ENCODE measurements at regions of chr7 and their contacts with region 1.

Region 1: DNA sequence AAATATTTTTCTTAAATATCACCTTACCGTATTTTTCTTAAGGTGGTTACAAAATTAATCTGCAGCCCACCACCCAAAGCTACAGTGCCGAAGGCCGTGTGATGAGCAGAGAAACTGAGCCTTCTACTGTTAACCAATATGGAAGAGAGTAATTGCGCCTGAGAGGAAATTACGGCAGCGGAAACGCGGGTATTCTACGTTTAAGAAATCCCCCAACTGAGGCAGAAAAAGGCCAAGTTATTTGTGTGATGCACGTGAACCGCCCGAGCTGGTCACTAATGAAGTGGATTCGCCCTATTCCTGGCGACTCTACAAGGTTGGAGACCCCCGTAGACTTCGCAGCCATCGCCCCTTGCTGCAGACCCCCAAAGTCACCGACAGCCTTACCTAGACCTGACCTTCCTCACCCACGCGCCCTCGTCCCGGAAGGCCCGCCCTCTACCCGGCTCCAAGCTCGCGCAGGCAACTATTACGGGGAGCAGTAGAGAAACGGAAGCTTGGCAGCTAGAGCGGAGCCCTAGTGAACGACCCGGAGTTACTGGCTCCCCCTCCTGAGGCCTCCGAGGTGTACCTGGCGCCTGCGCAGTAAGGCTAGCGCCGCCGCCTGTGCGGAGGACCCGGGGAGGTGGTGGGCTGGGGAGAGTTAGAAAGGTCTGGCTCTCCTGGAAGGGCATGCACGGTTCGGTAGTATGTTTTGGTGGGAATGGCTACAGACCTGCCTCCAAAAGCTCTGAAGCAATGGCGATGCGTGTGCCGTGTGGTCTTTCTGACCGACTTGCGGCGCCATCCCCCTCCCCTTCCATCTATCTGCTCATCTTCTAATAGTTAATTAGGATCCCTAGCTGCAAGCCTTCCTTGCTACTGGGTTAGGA is at the start of gene MRPS33:
- DNase-seq: peak; percentile 81 to 98
- H3K4me3 ChIP-seq: peak within 1 kb of the TSS; percentile 51 to 72
- H3K27ac ChIP-seq: peak within 1 kb of the TSS; percentile 82 to 87
- H3K4me1 ChIP-seq: peaks cover 3 to 6% of the 10 kb centered on the region in 2 donors
- H3K27me3 ChIP-seq: no peaks in the 10 kb centered on the region
- CTCF ChIP-seq: peak in 2 of 3 experiments; percentile 30 to 50
- total RNA-seq, gene MRPS33: 8.9 TPM

Region 2: GRCh38 chr7:140397784-140398750 is 616.7 kb before region 1 on chr7 and contains the start of gene SLC37A3:
- intact Hi-C with region 1: loop called (anchors 10 kb)
- DNase-seq: peak; percentile 37 to 89
- H3K4me3 ChIP-seq: peak within 1 kb of the TSS; percentile 81
- H3K27ac ChIP-seq: peak within 1 kb of the TSS; percentile 76 to 83
- H3K4me1 ChIP-seq: peaks cover 0 to 3% of the 10 kb centered on the region in 2 donors
- H3K27me3 ChIP-seq: no peaks in the 10 kb centered on the region
- CTCF ChIP-seq: peak in 1 of 3 experiments; percentile 29
- total RNA-seq, gene SLC37A3: 15.0 TPM

Region 3: DNA sequence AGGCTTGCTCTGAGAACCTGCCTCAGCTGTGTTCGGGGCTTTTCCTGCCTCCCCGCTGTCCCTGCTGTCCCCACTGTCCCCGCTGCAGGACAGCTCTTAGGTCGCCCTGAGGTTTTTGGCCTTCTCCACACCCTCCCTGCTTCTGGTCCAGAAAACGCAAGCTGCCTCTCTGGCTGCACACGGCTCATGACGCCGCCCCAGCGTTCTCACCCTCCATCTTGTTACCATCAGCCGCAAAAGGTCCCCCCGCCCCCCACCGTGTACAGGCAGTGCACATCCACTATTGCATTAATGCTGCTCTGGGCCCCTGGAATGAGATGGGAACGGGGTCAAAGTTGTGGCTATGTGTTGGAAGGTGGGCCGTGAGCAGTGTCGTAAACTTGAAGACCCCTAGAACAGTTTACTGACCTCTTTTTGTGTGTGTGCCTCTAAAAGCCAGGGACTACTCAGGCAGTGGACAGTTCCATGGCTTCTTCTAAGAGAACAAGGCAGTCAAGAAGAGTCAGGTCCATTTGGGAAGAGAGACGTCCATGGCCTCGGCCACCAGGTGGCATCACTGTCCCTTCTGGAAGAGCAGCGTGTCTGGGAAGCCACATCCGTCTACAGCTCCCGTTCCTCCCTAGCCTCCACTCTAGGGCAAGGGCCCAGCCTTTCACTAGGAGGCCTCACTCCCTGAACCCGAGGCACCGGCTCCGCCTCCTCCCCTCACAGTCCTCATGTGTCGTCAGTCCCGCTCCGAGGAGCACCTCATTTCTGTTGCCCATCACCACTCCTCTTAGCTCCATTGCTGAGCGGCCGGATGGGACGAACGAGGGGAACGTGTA is 497.0 kb before region 1 on chr7:
- intact Hi-C with region 1: loop called (anchors 5 kb)
- DNase-seq: peak; percentile 16 to 88
- H3K4me3 ChIP-seq: peak overlapping the region in 1 of 2 donors; percentile 6
- H3K27ac ChIP-seq: no peak overlapping the region
- H3K4me1 ChIP-seq: peaks cover 0 to 3% of the 10 kb centered on the region in 2 donors
- H3K27me3 ChIP-seq: no peaks in the 10 kb centered on the region
- CTCF ChIP-seq: peak; percentile 64 to 77 (median 72)

Region 4: DNA sequence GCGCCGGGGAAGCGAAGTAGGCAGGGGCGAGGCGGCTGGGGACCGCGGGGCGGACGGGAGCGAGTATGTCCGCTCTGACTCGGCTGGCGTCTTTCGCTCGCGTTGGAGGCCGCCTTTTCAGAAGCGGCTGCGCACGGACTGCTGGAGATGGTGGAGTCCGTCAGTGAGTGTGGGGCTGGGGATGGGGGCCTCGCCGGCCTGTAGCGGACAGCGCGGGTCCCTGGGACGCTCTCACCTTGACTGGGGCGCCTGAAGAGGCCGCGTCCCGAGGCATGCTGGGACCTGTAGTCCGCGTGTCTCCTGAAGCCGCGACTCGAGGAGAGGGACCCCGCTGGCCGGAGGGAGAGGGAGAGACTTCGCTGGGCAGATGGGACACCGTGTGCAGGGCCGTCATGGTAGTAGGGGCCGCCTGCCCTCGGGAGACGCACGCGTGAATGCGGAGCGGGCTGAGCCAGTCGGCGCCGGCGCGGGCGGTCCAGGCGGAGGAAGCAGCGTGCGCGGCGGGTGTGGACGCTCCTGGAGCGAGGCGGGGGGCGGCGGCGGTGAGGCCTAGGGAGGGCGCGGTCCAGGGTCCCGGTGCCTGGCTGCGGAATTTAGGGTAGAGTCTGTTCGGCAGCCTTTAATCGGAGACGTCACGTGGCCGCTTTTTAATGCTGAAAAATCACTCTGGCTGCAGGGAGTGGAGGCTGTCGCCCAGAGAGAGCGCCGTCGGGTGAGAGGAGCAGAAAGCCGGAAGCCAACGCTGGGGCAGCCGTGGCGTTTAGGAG is 317.9 kb before region 1 on chr7 and contains the start of gene NDUFB2:
- intact Hi-C with region 1: loop called (anchors 2 kb)
- DNase-seq: peak in 1 of 2 donors; percentile 77
- H3K4me3 ChIP-seq: peak within 1 kb of the TSS; percentile 62 to 74
- H3K27ac ChIP-seq: peak within 1 kb of the TSS; percentile 80 to 89
- H3K4me1 ChIP-seq: peaks cover 0 to 13% of the 10 kb centered on the region in 2 donors
- H3K27me3 ChIP-seq: no peaks in the 10 kb centered on the region
- CTCF ChIP-seq: no peak
- total RNA-seq, gene NDUFB2: 35.9 TPM

Region 5: GRCh38 chr7:140924019-140924820 is 90.5 kb before region 1 on chr7:
- intact Hi-C with region 1: loop called (anchors 1 kb)
- DNase-seq: peak; percentile 42 to 84
- H3K4me3 ChIP-seq: peak overlapping the region; percentile 95 to 100
- H3K27ac ChIP-seq: peak overlapping the region; percentile 100
- H3K4me1 ChIP-seq: peaks cover 6 to 11% of the 10 kb centered on the region in 2 donors
- H3K27me3 ChIP-seq: no peaks in the 10 kb centered on the region
- CTCF ChIP-seq: peak; percentile 24 to 63 (median 48)